ENCODE measurements at regions of chr5 and their contacts with region 1.

Region 1: GRCh38 chr5:1246711-1247431 is 21.7 kb downstream of the SLC6A18 start:
- DNase-seq: peak; percentile 21 to 48
- ATAC-seq: peak in 5 of 8 donors; percentile 28 to 48 (median 39)
- H3K4me3 ChIP-seq: no peak overlapping the region
- H3K27ac ChIP-seq: no peak overlapping the region
- H3K4me1 ChIP-seq: no peaks in the 10 kb centered on the region
- H3K27me3 ChIP-seq: peaks cover 0 to 83% (median 68%) of the 10 kb centered on the region in 7 donors
- CTCF ChIP-seq: no peak

Region 2: DNA sequence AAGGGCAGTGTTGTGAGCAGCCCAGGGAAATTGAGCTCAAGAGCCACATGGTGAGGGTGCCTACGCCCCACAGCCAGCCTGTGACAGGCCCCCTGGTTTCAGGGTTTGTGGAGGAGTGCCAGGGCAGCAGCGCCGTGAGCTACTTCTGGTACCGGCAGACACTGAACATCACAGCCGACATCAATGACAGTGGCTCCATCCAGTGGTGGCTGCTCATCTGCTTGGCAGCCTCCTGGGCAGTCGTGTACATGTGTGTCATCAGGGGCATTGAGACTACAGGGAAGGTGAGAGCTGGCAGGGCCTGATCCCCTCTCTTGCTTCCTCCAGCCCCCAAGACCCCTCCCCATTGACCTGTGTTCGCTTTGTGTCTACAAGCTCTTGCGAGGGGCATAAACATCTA is 11.5 kb before region 1 on chr5:
- intact Hi-C with region 1: no loop called
- DNase-seq: no peak
- ATAC-seq: no peak
- H3K4me3 ChIP-seq: no peak overlapping the region
- H3K27ac ChIP-seq: no peak overlapping the region
- H3K4me1 ChIP-seq: no peaks in the 10 kb centered on the region
- H3K27me3 ChIP-seq: peaks cover 0 to 17% (median 0%) of the 10 kb centered on the region in 7 donors
- CTCF ChIP-seq: no peak

Region 3: DNA sequence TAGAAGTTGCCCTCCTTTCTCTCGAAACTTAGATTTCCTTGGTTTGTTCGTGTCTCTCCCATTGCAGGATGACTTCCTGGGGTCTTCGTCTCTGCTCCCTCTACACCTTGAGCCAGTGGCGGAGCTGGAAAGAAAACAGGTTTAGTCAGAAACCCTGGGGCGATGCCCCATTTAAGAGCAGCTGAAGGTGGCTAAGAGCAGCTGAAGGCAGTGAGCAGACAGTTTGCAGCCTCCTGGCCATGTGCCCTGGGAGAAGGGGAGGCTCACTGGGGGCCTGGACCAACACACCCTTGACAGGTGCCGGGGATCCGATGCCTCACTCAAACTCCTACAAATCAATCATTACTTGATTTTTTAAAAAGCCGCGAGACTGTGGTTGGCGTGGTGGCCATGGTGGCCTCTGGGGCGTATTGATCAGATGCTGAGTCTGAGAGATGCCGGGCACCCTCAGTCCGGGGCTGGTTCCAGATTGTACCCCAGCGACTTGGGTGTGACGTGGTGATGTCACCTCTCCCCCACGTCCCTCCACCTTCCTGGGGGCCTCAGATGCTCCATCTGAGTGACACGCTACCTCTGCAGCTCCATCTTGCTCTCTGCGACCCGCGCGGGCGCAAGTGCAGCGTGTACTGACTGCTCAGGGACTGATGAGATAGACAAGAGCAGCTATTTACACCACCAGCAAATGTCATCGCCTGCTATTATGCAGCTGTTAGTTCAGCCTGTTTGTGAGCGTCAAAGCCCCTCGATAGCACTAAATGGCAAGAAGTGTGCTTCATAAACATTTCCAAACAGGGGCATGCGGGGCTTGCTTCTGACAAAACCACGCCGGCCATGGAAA is 148.0 kb after region 1 on chr5:
- intact Hi-C with region 1: loop called in 1 of 10 experiments (anchors 5 kb)
- DNase-seq: no peak
- ATAC-seq: no peak
- H3K4me3 ChIP-seq: no peak overlapping the region
- H3K27ac ChIP-seq: no peak overlapping the region
- H3K4me1 ChIP-seq: no peaks in the 10 kb centered on the region
- H3K27me3 ChIP-seq: peaks cover 0 to 60% (median 38%) of the 10 kb centered on the region in 7 donors
- CTCF ChIP-seq: no peak